ENCODE measurements at regions of chr17 and their contacts with region 1.

Region 1: GRCh38 chr17:35088881-35089585 is 25.5 kb upstream of the RFFL start:
- DNase-seq: peak; percentile 91
- CTCF ChIP-seq: peak; percentile 91

Region 2: GRCh38 chr17:34998205-34998604 is 90.8 kb before region 1 on chr17:
- CTCF ChIA-PET with region 1: interaction called, 61 read pairs
- POLR2A ChIA-PET with region 1: no interaction called
- DNase-seq: peak; percentile 90
- CTCF ChIP-seq: peak; percentile 93

Region 3: DNA sequence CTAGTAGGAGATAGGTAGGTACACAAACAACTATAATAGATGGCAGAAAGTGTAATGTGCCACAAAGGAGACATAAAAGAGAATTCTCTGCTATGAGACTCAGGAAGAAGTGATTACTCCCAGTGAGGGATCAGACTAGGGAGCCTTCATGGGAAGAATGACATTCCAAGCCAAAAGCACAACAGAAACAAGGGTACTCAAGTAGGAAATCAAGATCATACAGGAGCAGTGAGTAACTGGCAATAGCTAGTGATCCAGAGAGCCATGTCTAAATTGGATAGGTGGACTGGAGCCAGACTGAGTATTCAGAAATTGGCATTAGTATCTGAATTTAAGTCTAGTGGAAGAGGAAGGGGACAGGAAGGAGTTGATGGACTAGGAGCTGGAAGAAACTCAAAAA is 36.3 kb before region 1 on chr17:
- CTCF ChIA-PET with region 1: interaction called, 11 read pairs
- POLR2A ChIA-PET with region 1: no interaction called
- DNase-seq: no peak
- CTCF ChIP-seq: no peak

Region 4: GRCh38 chr17:35069311-35069710 is 19.7 kb before region 1 on chr17:
- CTCF ChIA-PET with region 1: interaction called, 25 read pairs
- POLR2A ChIA-PET with region 1: no interaction called
- DNase-seq: no peak
- CTCF ChIP-seq: no peak

Region 5: DNA sequence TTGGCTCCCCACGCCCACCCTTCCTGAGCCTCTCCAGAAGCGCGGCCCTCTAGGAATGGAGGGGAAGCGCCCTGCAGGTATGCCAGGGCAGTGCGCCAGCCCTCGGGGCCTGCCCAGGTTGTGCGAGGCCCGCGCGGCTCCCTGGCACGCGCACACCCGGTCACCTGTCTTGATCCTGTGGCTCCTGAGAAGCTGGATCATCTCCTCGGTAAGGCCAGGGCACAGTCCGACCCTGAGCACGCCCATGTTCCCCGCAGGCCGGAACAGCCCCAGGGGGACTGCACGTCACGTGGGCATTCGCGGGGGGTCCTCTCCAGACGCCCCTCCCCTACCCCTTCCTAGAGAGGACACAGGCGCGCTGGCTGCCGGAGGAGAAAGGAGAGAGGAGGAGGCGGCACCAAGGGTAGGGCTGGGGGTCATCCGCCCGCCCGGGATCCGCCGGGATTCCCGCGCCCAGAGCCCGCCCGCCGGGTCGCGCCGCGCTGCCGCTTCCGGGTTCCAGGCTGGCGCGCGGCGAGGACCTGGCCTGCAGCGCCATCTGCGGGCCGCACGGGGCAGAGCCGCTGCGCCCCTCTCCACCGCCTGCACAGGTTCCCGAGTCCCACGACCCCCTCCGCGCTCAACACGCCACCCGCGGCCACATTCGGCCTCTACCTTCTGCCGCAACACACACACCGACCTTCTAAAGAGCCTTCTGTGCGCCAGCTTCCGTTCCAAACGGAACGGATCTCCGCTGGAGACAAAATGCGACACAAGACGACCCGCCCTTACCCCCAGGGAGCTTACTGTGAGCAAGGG is 30.5 kb after region 1 on chr17 and contains the start of gene RAD51D:
- CTCF ChIA-PET with region 1: interaction called, 25 read pairs
- POLR2A ChIA-PET with region 1: interaction called, 7 read pairs
- DNase-seq: peak; percentile 94
- CTCF ChIP-seq: peak; percentile 90

Region 6: DNA sequence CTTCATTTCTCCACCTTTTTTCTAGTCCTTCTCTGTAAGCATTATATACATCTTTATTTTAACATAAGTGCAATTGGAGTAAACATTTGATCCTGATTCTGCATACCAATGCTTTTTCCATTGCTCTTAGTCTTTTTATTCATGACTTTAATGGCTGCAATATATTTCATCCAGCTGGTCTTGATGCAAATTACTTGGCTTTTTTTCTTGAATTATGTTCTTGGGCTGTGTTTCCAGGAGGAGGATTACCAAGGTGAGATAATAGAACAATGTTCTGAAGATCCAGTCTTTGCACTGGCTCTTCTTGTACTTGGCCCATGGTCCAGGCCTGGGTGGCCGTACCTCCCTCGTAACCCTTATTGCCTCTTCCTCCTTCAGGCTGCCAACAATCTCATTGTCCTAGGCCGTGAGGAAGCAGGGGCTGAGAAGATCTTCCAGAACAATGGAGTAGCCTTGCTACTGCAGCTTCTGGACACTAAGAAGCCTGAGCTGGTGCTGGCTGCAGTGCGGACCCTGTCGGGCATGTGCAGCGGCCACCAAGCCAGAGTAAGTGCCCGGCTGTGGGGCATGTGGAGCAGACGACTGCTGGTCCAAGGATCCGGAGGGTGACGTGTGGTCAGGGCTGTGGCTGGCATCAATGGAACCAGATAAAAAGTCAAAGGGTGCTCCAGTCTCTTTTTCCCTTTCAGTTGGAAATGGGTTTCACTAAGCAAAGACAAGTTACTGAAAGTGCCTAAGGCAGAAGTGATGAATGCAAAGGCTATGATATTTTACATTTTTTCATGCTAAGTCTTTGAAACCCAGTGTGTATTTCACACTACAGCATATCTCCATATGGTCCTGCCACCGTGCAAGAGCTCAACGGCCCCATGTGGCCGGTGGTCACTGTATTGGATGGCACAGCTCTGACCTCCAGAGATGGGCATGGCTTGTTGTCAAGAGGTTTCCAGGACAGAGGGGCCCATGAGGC is 65.4 kb after region 1 on chr17:
- CTCF ChIA-PET with region 1: no interaction called
- POLR2A ChIA-PET with region 1: no interaction called
- DNase-seq: no peak
- CTCF ChIP-seq: no peak

Measured in GM10248 (cell line).